Activated CD8-positive, alpha-beta T cell treated with anti-CD3 and anti-CD28 coated beads, Interleukin-2, amount 10 ng/mL, durations not matched to agents 7 days and 5 days (primary cell): ENCODE measurements at regions of chr4 and their contacts with region 1.

Region 1: GRCh38 chr4:52983563-52984303 is 121.6 kb downstream of the RASL11B start:
- DNase-seq: peak; percentile 27
- ATAC-seq: no peak
- H3K4me3 Mint-ChIP-seq: no peak overlapping the region
- H3K27ac Mint-ChIP-seq: no peak overlapping the region
- H3K4me1 Mint-ChIP-seq: peaks cover 8% of the 10 kb centered on the region
- H3K27me3 Mint-ChIP-seq: no peaks in the 10 kb centered on the region

Region 2: DNA sequence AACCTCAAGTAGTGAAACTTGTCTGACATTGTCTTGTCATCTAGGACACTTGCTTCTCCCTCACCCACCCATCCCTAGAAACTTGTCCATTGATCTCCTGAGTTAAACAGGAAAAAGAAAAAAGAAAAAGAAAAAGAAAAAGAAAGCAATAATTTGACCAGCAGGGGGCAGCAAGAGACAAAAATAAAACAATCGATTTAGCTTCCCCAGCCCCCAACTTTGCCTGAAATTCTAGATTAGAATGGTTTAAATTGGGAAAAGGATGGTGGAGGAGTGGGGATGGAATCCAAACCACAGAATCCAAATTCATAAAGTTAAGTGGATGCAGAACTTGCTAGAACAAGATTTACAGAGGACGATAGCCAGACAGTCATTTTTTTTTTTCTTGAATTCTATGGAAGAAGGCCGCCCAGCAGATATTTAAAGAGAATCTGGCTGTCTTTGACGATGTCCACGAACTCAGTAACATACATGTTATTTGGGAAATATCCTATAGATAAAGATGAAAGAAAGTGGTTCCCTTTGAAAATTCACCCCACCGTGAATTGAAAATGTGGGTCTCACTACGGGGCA is 607.5 kb before region 1 on chr4:
- CTCF ChIA-PET with region 1: interaction called, 13 read pairs
- POLR2A ChIA-PET with region 1: no interaction called
- DNase-seq: peak; percentile 35
- ATAC-seq: no peak
- H3K4me3 Mint-ChIP-seq: no peak overlapping the region
- H3K27ac Mint-ChIP-seq: no peak overlapping the region
- H3K4me1 Mint-ChIP-seq: no peaks in the 10 kb centered on the region
- H3K27me3 Mint-ChIP-seq: peaks cover 7% of the 10 kb centered on the region

Region 3: DNA sequence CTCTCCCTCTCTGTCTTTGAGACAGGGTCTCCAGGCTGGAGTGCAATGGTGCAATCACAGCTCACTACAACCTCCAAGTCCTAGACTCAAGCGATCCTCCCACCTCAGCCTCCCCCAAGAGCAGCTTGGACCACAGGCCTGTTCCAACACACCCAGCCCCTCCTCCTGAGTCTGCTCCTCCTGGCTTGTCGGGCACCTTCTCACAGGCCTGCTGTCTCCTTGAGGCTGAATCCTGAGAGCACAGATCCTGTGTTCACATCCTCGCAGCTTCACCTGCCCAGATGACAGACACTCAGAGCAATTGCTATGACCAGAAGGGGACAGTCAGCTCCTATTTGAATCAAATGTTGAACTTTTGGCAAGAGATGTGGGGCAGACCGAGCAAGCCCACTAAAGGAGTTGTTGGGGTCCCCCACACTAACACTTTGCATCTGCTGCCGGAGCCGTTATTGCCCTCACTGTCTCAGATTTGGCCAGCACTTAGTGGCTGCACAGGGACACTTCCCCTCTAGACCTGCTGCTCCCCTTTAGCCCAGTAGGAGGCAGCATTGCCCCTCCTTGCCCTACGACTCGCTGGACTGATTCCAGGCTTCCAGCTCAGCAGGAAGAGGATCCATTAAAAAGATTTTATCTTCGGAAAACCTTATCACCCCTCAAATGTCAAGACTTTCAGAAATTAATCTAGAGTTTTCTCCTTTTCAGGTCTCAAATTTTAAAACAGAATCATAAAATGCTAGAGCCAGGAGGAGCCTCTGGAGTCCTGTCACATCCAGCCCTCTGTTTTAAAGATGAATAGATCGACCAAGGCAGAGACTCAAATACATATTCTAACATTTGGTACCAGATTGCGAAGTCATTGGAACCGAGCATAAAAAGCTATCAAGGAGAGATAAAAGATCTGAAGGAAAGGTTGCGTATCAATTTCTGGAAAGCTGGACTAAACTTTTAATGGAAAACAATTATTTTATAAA is 438.3 kb before region 1 on chr4:
- CTCF ChIA-PET with region 1: interaction called, 54 read pairs
- POLR2A ChIA-PET with region 1: no interaction called
- DNase-seq: peak; percentile 58
- ATAC-seq: peak; percentile 76
- H3K4me3 Mint-ChIP-seq: no peak overlapping the region
- H3K27ac Mint-ChIP-seq: no peak overlapping the region
- H3K4me1 Mint-ChIP-seq: no peaks in the 10 kb centered on the region
- H3K27me3 Mint-ChIP-seq: peaks cover 2% of the 10 kb centered on the region